Heart left ventricle (tissue), 16 donors: ENCODE measurements at regions of chr22 and their contacts with region 1.

Region 1: DNA sequence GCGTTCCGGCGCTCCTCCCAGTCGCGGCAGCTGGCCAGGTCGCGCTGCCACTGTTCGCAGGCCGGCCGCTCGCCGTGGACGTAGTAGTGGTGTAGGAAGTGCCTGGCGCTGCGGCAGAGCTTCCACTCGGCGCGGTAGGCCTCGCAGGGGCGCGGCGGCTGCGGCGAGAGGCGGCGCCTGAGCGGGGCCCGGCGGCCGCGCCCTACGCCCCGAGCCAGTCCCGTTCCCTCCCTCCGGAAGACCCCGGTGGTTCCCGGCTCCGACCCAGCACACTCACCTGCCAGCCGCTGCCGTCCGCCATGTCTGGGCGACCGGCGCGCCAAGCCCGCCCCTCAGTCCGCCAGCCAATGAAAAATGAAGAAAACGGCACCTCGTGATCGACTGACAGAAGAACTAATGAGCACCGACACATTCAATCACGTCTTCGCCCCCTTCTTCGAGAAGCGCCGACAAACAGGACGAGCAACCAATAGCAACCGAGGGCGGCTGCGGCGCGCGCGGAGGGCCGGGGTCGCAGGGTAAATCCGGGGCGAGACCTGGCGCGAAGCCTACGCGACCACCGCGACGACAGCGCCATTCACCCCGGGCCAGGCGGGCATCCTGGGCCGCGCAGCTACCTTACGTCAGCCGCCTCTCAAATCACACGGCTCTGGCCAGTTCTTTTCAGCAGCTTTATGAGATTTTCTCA is at the start of gene C22orf39:
- DNase-seq: peak; percentile 91 to 92 (median 92)
- ATAC-seq: peak; percentile 84 to 97 (median 94)
- H3K4me3 ChIP-seq: peak within 1 kb of the TSS; percentile 73 to 99 (median 91)
- H3K27ac ChIP-seq: peak within 1 kb of the TSS; percentile 76 to 97 (median 91)
- H3K4me1 ChIP-seq: peaks cover 2 to 54% (median 33%) of the 10 kb centered on the region in 12 donors
- H3K27me3 ChIP-seq: no peaks in the 10 kb centered on the region
- CTCF ChIP-seq: peak in 1 of 12 donors; percentile 7
- POLR2A ChIP-seq: peak in 1 of 2 donors; percentile 88
- total RNA-seq, gene C22orf39: 39.1 to 115 (median 64.5) TPM

Region 2: DNA sequence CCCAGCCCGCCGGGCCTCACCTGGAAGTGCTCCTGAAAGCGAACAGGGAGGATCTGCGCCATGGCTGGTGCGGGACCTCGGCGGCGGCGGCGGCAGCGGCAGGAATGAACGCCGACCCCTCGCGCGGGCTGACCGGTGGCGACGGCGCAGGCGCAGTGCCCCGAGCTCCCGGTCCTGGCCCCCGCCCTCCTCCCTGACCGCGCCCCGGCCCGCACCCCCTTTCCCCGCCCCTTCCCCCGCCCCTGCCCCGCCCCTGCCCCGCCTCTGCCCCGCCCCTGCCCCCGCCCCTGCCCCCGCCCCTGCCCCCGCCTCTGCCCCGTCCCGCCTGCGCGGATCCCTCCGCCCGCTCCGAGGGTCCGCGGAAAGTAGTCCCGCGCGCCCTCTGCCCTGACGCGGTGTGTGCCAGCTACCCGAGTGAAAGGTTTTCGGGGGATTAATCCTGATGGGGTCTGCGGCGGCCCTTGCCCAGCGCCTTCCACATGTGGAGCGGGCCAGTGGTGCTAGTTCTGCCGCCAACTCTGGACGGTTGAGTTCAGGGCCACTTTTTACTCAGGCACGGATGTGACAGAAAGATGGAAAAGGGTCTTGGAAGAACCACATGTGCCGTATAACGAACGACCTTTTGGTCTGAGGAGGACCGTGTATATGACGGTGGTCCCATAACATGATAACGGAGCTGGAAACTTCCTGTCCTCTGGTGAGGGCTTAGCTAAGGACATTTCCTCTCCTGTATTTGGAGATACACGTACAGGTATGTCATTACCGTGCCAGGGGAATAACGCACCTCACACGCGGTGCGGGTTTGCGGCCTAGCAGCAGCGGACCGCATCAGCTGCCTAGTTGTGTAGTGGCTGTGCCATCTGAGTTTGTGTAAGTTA is 155.7 kb before region 1 on chr22 and contains the start of gene CLTCL1:
- intact Hi-C with region 1: loop called in 1 of 10 experiments (anchors 10 kb)
- DNase-seq: peak; percentile 86 to 93 (median 89)
- ATAC-seq: peak; percentile 65 to 94 (median 88)
- H3K4me3 ChIP-seq: peak within 1 kb of the TSS; percentile 62 to 100 (median 92)
- H3K27ac ChIP-seq: peak within 1 kb of the TSS; percentile 64 to 93 (median 82)
- H3K4me1 ChIP-seq: peaks cover 0 to 49% (median 24%) of the 10 kb centered on the region in 12 donors
- H3K27me3 ChIP-seq: no peaks in the 10 kb centered on the region
- CTCF ChIP-seq: no peak
- POLR2A ChIP-seq: peak in 1 of 2 donors; percentile 70
- total RNA-seq, gene CLTCL1: 7.6 to 20.9 (median 10.4) TPM